Transverse colon (tissue), 4 donors: ENCODE measurements at regions of chr17 and their contacts with region 1.

Region 1: GRCh38 chr17:1684378-1685189 is at the start of gene PRPF8:
- DNase-seq: peak; percentile 98
- H3K4me3 ChIP-seq: peak within 1 kb of the TSS; percentile 54 to 87 (median 70)
- H3K27ac ChIP-seq: peak within 1 kb of the TSS; percentile 90 to 97 (median 92)
- H3K4me1 ChIP-seq: peaks cover 6 to 23% (median 19%) of the 10 kb centered on the region in 4 donors
- H3K27me3 ChIP-seq: no peaks in the 10 kb centered on the region
- CTCF ChIP-seq: peak in 1 of 5 experiments; percentile 12
- EP300 ChIP-seq: no peak
- POLR2A ChIP-seq: peak; percentile 96
- total RNA-seq, gene PRPF8: 155 to 410 (median 169) TPM

Region 2: GRCh38 chr17:1661045-1661444 is 23.5 kb before region 1 on chr17:
- in situ Hi-C with region 1: no loop called
- intact Hi-C with region 1: loop called (anchors 1 kb)
- DNase-seq: no peak
- H3K4me3 ChIP-seq: no peak overlapping the region
- H3K27ac ChIP-seq: no peak overlapping the region
- H3K4me1 ChIP-seq: no peaks in the 10 kb centered on the region
- H3K27me3 ChIP-seq: no peaks in the 10 kb centered on the region
- CTCF ChIP-seq: no peak
- EP300 ChIP-seq: no peak
- POLR2A ChIP-seq: no peak

Region 3: DNA sequence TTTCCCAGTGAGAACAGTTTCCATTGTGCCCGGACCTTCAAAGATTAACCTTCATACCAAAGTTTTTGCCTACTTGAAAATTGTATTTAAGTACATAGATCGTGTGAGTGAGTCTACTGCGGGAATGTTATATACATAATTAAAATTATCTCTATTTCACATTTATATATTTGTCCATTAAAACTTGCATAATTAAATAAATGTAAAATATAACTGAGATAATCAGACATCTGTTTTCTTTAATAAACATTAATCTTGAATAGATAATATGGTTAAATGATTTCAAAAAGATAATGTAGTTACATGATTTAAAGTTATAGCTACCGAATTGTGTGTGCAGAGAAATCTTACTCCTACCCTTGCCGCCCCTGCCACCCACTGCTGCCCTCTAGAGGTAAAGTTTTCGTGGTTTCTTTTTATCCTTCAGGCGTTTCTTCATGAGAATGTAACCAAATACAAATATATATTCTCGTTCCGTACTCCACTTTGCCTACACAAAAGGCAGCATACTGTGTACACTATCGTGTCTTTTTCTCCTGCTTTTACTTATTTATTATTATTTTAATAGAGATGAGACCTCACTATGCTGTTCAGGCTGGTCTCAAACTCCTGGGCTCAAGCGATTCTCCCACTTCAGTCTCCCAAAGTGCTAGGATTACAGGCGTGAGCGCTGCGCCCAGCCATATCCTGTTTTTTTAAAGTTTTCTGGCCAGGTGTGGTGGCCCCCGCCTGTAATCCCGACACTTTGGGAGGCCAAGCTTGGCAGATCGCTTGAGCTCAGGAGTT is 180.9 kb after region 1 on chr17:
- in situ Hi-C with region 1: loop called in 1 of 4 experiments (anchors 25 kb)
- intact Hi-C with region 1: no loop called
- DNase-seq: peak; percentile 48
- H3K4me3 ChIP-seq: no peak overlapping the region
- H3K27ac ChIP-seq: no peak overlapping the region
- H3K4me1 ChIP-seq: no peaks in the 10 kb centered on the region
- H3K27me3 ChIP-seq: no peaks in the 10 kb centered on the region
- CTCF ChIP-seq: peak; percentile 61 to 75 (median 63)
- EP300 ChIP-seq: no peak
- POLR2A ChIP-seq: no peak

Region 4: DNA sequence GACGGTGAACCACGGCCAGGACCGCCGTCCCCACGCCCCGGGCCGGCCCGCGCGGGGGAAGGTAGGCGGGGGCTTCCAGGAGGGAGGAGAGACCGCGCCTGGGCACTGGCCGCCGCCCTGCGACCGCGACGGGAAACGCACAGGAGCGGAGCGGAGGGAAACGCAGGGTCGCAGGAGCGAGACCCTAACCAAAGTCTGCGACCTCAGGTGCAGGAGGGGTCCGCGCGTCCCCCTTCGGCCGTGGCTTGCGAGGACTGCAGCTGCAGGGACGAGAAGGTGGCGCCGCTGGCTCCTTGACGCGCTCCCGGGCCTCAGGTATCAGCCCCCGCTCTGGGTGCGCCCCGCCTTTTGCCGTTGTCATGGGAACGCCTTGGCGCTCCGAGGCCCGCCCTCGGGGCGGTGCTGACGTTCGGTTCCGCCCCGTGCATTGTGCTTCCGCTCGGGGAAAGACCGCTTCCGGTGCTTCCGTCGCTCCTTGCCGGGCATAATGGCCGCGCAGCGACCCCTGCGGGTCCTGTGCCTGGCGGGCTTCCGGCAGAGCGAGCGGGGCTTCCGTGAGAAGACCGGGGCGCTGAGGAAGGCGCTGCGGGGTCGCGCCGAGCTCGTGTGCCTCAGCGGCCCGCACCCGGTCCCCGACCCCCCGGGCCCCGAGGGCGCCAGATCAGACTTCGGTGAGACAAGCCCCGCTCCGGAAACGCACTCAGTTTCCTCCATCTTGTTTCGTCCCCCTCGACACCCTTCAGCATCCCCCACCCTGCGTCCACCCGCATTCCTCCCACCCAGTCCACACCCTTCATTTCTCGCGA is 357.2 kb after region 1 on chr17 and contains the start of gene OVCA2:
- in situ Hi-C with region 1: loop called in 1 of 4 experiments (anchors 25 kb)
- intact Hi-C with region 1: no loop called
- DNase-seq: peak; percentile 96
- H3K4me3 ChIP-seq: peak within 1 kb of the TSS; percentile 56 to 91 (median 75)
- H3K27ac ChIP-seq: peak within 1 kb of the TSS; percentile 81 to 94 (median 91)
- H3K4me1 ChIP-seq: peaks cover 8 to 20% (median 15%) of the 10 kb centered on the region in 4 donors
- H3K27me3 ChIP-seq: no peaks in the 10 kb centered on the region
- CTCF ChIP-seq: peak; percentile 16 to 44 (median 36)
- EP300 ChIP-seq: no peak
- POLR2A ChIP-seq: peak; percentile 77
- total RNA-seq, gene OVCA2: 5.4 to 73.3 (median 36.9) TPM